Mammary epithelial cell (primary cell): ENCODE measurements at regions of chr1 and their contacts with region 1.

Region 1: DNA sequence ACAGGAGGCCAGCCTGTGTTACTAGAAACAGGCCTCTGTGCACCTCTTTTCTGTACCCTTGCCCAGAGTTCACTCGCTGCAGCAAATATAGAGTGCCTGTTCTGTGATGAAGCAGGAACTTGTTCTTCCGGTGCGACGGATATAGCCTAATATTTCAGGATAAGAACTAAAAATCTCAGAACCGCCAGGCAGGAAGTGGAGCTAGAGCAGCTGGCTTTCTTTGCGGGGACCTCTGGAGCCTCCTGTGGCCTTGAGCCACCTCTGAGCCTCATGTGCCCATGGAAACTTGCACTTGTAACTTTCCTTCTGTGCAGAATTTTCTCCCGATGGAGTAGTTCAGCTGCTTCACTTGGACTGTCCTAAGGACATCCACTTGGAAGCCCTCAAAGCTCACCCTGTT is 44.5 kb upstream of the VAMP3 start:
- DNase-seq: no peak
- H3K4me3 ChIP-seq: no peak overlapping the region
- H3K27ac ChIP-seq: no peak overlapping the region
- H3K4me1 ChIP-seq: no peaks in the 10 kb centered on the region
- H3K27me3 ChIP-seq: no peaks in the 10 kb centered on the region
- CTCF ChIP-seq: no peak

Region 2: GRCh38 chr1:7678491-7679158 is 48.0 kb before region 1 on chr1:
- CTCF ChIA-PET with region 1: no interaction called
- dilution Hi-C with region 1: loop called (anchors 5 kb)
- in situ Hi-C with region 1: no loop called
- intact Hi-C with region 1: no loop called
- DNase-seq: no peak
- H3K4me3 ChIP-seq: no peak overlapping the region
- H3K27ac ChIP-seq: no peak overlapping the region
- H3K4me1 ChIP-seq: peaks cover 2% of the 10 kb centered on the region
- H3K27me3 ChIP-seq: peaks cover 2% of the 10 kb centered on the region
- CTCF ChIP-seq: no peak

Region 3: DNA sequence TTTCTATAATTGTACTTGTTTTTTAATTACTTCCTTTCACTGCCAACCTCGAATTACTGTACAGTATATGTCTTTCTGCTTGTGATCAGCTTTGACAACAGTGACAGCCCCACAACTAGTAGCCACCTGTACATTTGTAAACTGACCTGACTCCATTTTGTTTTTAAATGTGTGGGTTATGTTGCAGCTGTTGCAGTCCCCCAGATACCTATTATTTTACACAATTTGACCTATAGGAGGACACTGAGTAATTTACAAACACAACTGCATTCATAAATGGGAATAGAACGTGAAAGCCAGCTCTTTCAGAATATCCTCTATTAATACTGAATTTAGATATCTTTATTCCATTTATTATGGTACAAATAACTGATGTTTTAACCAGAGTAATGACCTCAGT is 42.0 kb after region 1 on chr1:
- CTCF ChIA-PET with region 1: no interaction called
- dilution Hi-C with region 1: loop called (anchors 5 kb)
- in situ Hi-C with region 1: no loop called
- intact Hi-C with region 1: no loop called
- DNase-seq: no peak
- H3K4me3 ChIP-seq: no peak overlapping the region
- H3K27ac ChIP-seq: no peak overlapping the region
- H3K4me1 ChIP-seq: peaks cover 16% of the 10 kb centered on the region
- H3K27me3 ChIP-seq: no peaks in the 10 kb centered on the region
- CTCF ChIP-seq: no peak